H1 (cell line): ENCODE measurements at regions of chr20 and their contacts with region 1.

Region 1: GRCh38 chr20:43492101-43492500 is 15.4 kb upstream of the L3MBTL1 start:
- DNase-seq: no peak
- H3K4me3 ChIP-seq: no peak overlapping the region
- H3K27ac ChIP-seq: no peak overlapping the region
- H3K4me1 ChIP-seq: no peaks in the 10 kb centered on the region
- H3K27me3 ChIP-seq: no peaks in the 10 kb centered on the region
- CTCF ChIP-seq: no peak
- EP300 ChIP-seq: no peak
- POLR2A ChIP-seq: no peak
- RAD21 ChIP-seq: no peak

Region 2: DNA sequence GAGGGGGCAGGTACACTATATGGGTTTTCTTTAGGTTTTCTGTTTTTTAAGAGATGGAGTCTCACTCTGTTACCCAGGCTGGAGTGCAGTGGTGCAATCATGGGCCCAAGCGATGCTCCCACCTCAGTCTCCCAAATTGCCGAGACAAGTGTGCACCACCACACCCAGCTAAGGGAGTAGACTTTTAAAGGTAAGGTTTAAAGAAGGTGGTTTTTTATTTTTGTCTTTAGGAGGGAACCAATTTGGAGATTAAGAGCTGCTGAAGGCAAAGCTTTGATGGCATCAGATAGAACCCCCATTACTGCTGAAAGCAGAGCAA is 26.5 kb before region 1 on chr20:
- CTCF ChIA-PET with region 1: no interaction called
- POLR2A ChIA-PET with region 1: interaction called, 14 read pairs
- DNase-seq: no peak
- H3K4me3 ChIP-seq: no peak overlapping the region
- H3K27ac ChIP-seq: no peak overlapping the region
- H3K4me1 ChIP-seq: no peaks in the 10 kb centered on the region
- H3K27me3 ChIP-seq: no peaks in the 10 kb centered on the region
- CTCF ChIP-seq: no peak
- EP300 ChIP-seq: no peak
- POLR2A ChIP-seq: peak in 1 of 2 experiments; percentile 24; a peak in 1 of 3 replicates
- RAD21 ChIP-seq: no peak